ENCODE measurements at regions of chr20 and their contacts with region 1.

Region 1: GRCh38 chr20:17682103-17682888 is at the start of gene RRBP1:
- DNase-seq: peak; percentile 84
- H3K4me3 ChIP-seq: peak within 1 kb of the TSS; percentile 92
- H3K27me3 ChIP-seq: peaks cover 14% of the 10 kb centered on the region
- CTCF ChIP-seq: peak; percentile 86
- polyA plus RNA-seq, gene RRBP1: 87.1 and 98.7 TPM in 2 replicates

Region 2: GRCh38 chr20:17710379-17711266 is 28.3 kb after region 1 on chr20:
- CTCF ChIA-PET with region 1: interaction called, 11 read pairs
- POLR2A ChIA-PET with region 1: no interaction called
- DNase-seq: no peak
- H3K4me3 ChIP-seq: no peak overlapping the region
- H3K27me3 ChIP-seq: 0 out of 2 replicates have a peak, but pooled peaks cover 1% of the 10 kb centered on the region
- CTCF ChIP-seq: no peak

Region 3: GRCh38 chr20:17806739-17807441 is 124.6 kb after region 1 on chr20:
- CTCF ChIA-PET with region 1: interaction called, 13 read pairs
- POLR2A ChIA-PET with region 1: interaction called, 5 read pairs
- DNase-seq: peak; percentile 49
- H3K4me3 ChIP-seq: no peak overlapping the region
- H3K27me3 ChIP-seq: no peaks in the 10 kb centered on the region
- CTCF ChIP-seq: 0 out of 2 replicates have a peak, but pooled peaks have one; percentile 9

Region 4: DNA sequence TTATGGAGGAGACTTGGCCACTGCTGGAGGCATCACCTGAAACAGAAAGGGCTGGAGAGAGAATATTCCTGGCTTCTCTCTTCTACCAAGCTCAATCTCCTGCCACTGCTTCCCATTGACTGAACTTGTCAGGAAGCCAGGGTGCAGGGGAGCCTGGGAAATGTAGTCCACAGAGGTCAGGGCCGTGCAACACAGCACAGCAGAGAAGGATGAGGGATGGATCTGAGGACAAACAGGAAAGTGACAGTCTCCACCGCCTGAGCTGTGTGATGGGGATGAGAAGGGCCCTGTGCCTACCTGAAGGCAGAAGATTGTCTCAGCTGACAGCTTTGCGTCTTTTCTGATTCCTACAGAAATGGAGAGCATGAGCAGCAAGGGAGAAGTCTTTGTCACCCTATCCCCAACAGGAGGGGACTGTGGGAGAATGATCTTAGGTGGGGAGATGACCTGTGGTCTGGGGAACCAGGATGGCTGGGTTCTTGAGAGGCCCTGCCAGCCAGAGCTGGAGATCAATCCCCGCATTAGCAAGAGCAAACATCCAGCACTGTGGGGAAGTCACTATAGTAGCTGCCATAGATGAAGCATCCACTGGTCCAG is 172.1 kb after region 1 on chr20:
- CTCF ChIA-PET with region 1: interaction called, 11 read pairs
- POLR2A ChIA-PET with region 1: interaction called, 7 read pairs
- DNase-seq: no peak
- H3K4me3 ChIP-seq: no peak overlapping the region
- H3K27me3 ChIP-seq: no peaks in the 10 kb centered on the region
- CTCF ChIP-seq: no peak

Region 5: DNA sequence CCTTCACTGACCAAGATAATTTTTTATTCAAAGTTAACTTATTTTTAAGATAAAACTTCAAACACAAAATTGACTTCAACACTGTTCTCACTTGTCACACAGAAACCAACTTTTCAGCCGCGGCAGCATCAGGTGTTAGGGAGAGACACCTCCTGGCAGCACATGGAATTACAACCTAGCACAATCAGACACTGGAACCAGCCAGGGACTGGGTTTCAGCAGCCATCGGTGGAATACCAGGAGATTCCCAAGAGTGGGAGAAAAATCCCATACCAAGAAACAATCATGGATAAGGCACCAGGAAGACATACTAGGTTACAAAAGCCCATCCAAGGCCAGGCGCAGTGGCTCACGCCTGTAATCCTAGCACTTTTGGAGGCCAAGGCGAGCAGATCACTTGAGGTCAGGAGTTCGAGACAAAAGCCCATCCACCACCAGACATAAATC is 216.3 kb after region 1 on chr20:
- CTCF ChIA-PET with region 1: interaction called, 21 read pairs
- POLR2A ChIA-PET with region 1: interaction called, 16 read pairs
- DNase-seq: no peak
- H3K4me3 ChIP-seq: no peak overlapping the region
- H3K27me3 ChIP-seq: no peaks in the 10 kb centered on the region
- CTCF ChIP-seq: peak; percentile 93